Right ventricle myocardium inferior (tissue), 1 donor: ENCODE measurements at regions of chr17 and their contacts with region 1.

Region 1: DNA sequence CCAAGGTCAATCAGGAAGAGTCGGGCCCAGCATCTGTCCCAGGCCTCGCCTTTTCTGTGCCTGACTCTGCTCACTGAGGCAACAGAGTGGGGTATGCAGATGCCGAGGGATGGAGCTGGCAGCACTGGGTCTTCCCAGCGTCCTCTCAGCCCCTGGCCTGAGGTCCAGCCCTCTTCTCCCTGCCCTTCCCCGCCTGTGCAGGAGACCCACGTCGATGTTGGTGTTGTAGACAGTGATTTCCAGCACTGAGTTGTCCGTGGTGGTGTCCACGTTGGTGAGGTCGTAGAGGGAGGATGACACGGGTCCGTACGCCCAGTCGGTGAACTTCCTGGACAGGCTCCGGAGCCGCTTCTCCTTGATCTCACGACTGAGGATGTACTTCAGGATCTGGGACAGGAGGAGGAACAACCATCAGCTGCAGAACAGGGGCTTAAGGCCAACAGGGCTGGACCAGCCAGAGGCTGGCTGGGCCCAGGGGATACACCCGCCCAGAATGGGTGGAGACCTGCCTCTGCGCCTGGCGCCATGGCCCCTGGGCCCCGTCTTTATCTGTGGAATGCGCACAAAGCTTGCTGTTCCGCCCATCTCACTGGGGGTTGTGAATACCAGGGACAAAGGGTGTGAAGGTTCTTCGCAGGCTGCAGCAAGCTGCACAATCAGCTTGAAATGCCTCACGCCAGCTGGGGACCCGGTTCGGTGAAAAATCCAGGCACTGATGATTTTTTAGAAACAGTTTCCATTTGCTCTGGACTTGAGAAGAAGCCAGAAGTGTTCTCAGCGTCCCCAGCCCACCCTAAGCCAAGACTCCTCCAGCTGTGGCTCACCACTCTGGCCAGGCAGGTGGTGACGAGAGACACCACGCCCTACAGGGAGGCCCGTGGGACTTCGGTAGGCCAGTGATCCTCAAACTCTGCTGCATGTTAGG is 27.5 kb downstream of the TRPV3 start:
- DNase-seq: peak; percentile 89
- ATAC-seq: peak; percentile 96

Region 2: GRCh38 chr17:3512505-3513171 is 17.4 kb before region 1 on chr17:
- intact Hi-C with region 1: loop called (anchors 1 kb)
- DNase-seq: peak; percentile 89
- ATAC-seq: peak; percentile 96

Region 3: DNA sequence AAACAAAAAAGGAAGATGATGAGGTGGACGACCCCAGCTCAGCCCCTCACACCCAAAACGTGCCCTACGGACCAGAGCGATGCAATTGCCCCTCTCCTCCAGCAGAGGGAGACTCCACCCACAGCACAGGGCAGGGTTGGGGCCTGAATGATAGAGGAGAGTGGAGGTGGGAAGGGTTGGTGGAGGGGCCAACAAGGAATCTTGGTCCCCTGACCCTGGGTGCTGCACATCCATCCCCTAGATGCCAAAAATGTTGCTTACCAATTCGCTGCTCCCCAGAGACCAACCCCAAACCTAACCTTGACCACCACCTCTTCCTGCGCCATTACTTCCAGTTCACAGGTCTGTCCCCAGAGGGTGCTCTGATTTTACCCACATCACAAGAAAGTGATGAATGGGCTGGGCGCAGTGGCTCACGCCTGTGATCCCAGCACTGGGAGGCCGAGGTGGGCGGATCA is 153.0 kb after region 1 on chr17:
- intact Hi-C with region 1: no loop called
- DNase-seq: peak; percentile 59
- ATAC-seq: peak; percentile 50